IMR-90 (cell line): ENCODE measurements at regions of chr19 and their contacts with region 1.

Region 1: GRCh38 chr19:32858155-32858554 is 11.4 kb downstream of the SLC7A9 start:
- DNase-seq: no peak
- ATAC-seq: no peak
- H3K4me3 ChIP-seq: no peak overlapping the region
- H3K27ac ChIP-seq: no peak overlapping the region
- H3K4me1 ChIP-seq: no peaks in the 10 kb centered on the region
- H3K27me3 ChIP-seq: no peaks in the 10 kb centered on the region
- CTCF ChIP-seq: no peak
- POLR2A ChIP-seq: no peak
- RAD21 ChIP-seq: no peak

Region 2: GRCh38 chr19:32824191-32824751 is 33.9 kb before region 1 on chr19:
- CTCF ChIA-PET with region 1: no interaction called
- POLR2A ChIA-PET with region 1: interaction called, 13 read pairs
- dilution Hi-C with region 1: no loop called
- in situ Hi-C with region 1: no loop called
- intact Hi-C with region 1: no loop called
- DNase-seq: no peak
- ATAC-seq: no peak
- H3K4me3 ChIP-seq: no peak overlapping the region
- H3K27ac ChIP-seq: no peak overlapping the region
- H3K4me1 ChIP-seq: no peaks in the 10 kb centered on the region
- H3K27me3 ChIP-seq: peaks cover 17% of the 10 kb centered on the region
- CTCF ChIP-seq: no peak
- POLR2A ChIP-seq: no peak
- RAD21 ChIP-seq: no peak

Region 3: GRCh38 chr19:32843716-32844245 is 14.4 kb before region 1 on chr19:
- CTCF ChIA-PET with region 1: no interaction called
- POLR2A ChIA-PET with region 1: no interaction called
- dilution Hi-C with region 1: no loop called
- in situ Hi-C with region 1: no loop called
- intact Hi-C with region 1: no loop called
- DNase-seq: no peak
- ATAC-seq: no peak
- H3K4me3 ChIP-seq: no peak overlapping the region
- H3K27ac ChIP-seq: no peak overlapping the region
- H3K4me1 ChIP-seq: no peaks in the 10 kb centered on the region
- H3K27me3 ChIP-seq: no peaks in the 10 kb centered on the region
- CTCF ChIP-seq: no peak
- POLR2A ChIP-seq: no peak
- RAD21 ChIP-seq: no peak